Activated CD8-positive, alpha-beta memory T cell treated with anti-CD3 and anti-CD28 coated beads, Interleukin-2, amount 10 ng/mL, durations not matched to agents 7 days and 5 days (primary cell): ENCODE measurements at regions of chr3 and their contacts with region 1.

Region 1: GRCh38 chr3:13895155-13896105 is 15.6 kb upstream of the WNT7A start:
- DNase-seq: peak; percentile 98
- ATAC-seq: peak; percentile 99
- H3K4me3 Mint-ChIP-seq: peak overlapping the region; percentile 79
- H3K27ac Mint-ChIP-seq: peak overlapping the region; percentile 81
- H3K4me1 Mint-ChIP-seq: peaks cover 24% of the 10 kb centered on the region
- H3K27me3 Mint-ChIP-seq: no peaks in the 10 kb centered on the region

Region 2: DNA sequence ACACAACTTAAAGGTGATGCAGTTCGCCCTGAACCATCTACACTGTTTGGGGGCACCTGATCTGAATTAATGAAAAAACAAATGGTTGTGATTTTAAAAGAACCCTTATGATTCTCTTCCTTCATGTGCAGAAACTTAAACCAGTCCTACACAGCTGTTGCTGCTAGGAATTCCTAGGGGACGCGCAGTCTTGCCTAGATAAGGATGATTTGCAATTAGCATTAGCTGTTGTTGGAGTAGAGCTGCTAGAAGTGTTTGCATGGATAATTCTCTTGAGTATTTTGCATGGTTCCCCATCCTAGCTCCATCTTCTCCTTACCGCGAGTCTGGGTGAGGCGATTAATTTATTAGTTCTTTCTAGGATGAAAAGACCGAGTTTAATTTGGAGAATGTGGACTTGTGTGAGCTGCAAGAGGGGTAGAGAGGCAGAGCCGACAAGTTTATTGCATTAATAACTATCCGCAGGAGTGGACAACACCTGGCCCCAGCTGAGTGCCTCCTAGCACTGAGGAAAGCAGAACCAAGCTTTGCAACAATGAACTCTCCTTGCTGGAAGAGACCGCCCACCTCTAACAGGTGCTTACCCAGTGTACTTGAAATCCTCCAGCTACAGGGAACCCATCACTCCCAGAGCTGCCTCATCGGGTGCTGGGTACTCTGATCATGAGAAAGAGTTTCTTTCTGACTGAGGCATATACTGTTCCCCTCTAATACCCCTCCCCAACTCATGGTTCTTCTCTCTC is 59.5 kb after region 1 on chr3:
- CTCF ChIA-PET with region 1: no interaction called
- DNase-seq: no peak
- ATAC-seq: no peak
- H3K4me3 Mint-ChIP-seq: no peak overlapping the region
- H3K27ac Mint-ChIP-seq: no peak overlapping the region
- H3K4me1 Mint-ChIP-seq: no peaks in the 10 kb centered on the region
- H3K27me3 Mint-ChIP-seq: peaks cover 2% of the 10 kb centered on the region

Region 3: GRCh38 chr3:14113965-14114635 is 218.7 kb after region 1 on chr3:
- CTCF ChIA-PET with region 1: interaction called, 23 read pairs
- DNase-seq: no peak
- ATAC-seq: no peak
- H3K4me3 Mint-ChIP-seq: no peak overlapping the region
- H3K27ac Mint-ChIP-seq: no peak overlapping the region
- H3K4me1 Mint-ChIP-seq: peaks cover 2% of the 10 kb centered on the region
- H3K27me3 Mint-ChIP-seq: no peaks in the 10 kb centered on the region